ENCODE measurements at regions of chr7 and their contacts with region 1.

Region 1: DNA sequence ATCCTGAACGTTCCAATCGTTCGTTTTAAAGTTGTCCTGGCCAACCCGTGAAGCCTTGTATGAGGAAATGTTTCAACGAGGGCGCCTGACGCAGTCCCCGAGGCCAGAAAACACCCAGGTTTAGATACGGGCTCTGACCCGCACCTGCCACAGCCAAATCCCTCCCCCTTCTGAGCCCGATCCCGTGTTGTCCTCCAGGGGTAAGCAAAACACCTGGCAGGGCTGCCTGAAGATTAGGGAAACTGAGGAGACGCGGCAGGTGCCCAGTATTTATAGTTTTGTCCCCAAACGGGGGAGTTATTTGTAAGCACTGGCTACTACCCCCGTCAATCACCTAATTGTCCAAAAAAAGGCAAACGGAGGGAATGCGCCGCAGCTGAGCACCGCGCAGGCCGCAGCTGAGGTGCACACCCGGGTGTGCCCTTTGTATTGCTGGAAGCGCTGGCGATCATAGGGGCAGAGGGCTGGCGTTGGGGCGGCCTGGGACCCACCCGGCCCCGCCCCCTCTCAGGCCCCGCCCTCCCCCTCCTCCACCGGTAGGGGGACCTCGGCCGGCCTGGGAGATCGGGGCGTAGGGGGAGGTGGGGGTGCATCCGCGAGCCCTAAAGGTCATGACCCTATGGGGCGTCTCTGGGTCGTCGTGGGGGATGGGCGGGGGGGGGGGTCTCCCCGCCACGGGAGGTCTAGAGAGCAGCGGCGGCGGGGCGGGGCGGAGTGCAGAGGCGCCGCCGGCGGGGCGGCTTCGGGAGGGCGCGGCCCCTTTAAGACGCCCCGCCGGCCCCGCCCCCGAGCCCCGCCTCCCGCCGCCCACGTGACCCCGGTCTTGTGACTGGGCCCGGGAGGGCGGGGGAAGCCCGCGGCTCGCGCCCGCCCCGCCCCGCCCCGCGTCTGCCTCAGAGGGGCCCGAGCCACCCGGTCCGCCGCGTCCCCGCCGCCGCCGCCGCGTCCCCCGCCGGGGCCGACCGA is at the start of gene BRI3:
- DNase-seq: peak; percentile 91
- H3K4me3 Mint-ChIP-seq: peak within 1 kb of the TSS; percentile 77
- H3K27ac Mint-ChIP-seq: peak within 1 kb of the TSS; percentile 41
- H3K4me1 Mint-ChIP-seq: peaks cover 29% of the 10 kb centered on the region
- H3K27me3 Mint-ChIP-seq: no peaks in the 10 kb centered on the region
- total RNA-seq, gene BRI3: 51.6 to 54.4 TPM

Region 2: DNA sequence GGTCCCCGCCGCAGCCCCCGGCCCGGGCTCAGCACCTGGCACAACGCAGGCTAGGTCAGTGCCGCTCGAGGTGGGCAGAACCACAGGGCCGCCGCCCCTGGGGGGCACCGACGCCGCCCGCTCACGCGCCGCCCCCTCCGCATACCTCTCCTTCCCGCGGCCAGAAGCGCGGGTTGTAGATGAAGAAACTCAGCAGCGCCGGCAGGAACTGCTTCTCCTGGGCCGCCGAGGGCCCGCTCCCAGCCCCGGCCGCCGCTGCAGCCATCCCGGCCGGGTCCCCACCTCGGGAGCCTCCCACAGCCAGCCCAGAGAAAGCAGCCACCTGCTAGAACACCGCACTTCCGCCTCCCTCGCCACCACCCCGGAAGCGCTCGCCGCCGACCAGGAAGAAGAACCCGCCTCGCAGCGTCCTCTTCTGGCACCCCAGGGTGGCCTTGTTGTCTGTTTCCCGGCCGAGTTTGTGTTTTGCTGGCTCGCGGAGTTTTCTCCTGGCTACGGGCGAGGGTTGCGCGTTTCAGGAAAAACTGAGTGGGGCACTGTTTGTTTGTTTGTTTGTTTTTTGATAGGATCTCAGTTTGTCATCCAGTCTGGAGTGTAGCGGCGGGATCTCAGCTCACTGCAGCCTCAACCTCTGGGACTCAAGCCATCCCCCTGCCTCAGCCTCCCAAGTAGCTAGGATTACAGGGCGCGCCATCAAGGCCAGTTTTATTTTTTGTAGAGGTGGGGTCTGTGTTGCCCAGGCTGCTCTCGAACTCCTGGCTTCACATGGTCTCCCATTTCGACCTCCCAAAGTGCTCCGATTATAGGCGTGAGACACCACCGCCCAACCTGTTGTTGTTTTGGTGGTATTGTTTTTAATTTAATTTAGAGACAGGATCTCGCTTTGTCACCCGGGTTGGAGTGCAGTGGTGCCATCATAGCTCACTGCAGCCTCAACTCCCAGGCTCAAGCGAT is 308.8 kb before region 1 on chr7:
- CTCF ChIA-PET with region 1: no interaction called
- intact Hi-C with region 1: loop called (anchors 2 kb)
- DNase-seq: peak; percentile 91
- H3K4me3 Mint-ChIP-seq: peak overlapping the region; percentile 94
- H3K27ac Mint-ChIP-seq: peak overlapping the region; percentile 95
- H3K4me1 Mint-ChIP-seq: peaks cover 27% of the 10 kb centered on the region
- H3K27me3 Mint-ChIP-seq: no peaks in the 10 kb centered on the region

Region 3: GRCh38 chr7:98079891-98080648 is 201.0 kb before region 1 on chr7:
- CTCF ChIA-PET with region 1: no interaction called
- intact Hi-C with region 1: no loop called
- DNase-seq: no peak
- H3K4me3 Mint-ChIP-seq: no peak overlapping the region
- H3K27ac Mint-ChIP-seq: no peak overlapping the region
- H3K4me1 Mint-ChIP-seq: no peaks in the 10 kb centered on the region
- H3K27me3 Mint-ChIP-seq: peaks cover 5% of the 10 kb centered on the region

Region 4: DNA sequence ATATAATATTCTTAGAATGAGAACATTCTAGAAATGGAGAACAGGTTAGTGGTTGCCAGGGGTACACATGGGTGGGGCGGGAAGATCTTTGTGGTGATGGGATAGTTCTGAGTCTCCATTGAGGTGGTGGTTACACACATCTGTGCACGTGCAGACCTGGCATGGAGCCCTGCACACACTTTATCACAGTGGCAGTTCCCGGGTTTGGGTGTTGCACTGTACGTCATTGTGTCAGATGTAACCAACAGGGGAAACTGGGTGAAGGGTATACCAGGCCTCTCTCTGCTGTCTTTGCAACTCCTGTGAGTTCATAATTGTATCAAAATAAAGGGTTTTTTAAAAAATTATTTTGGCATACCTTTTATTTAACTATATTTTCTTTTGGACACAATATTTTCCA is 123.3 kb before region 1 on chr7:
- CTCF ChIA-PET with region 1: no interaction called
- intact Hi-C with region 1: no loop called
- DNase-seq: no peak
- H3K4me3 Mint-ChIP-seq: no peak overlapping the region
- H3K27ac Mint-ChIP-seq: no peak overlapping the region
- H3K4me1 Mint-ChIP-seq: no peaks in the 10 kb centered on the region
- H3K27me3 Mint-ChIP-seq: no peaks in the 10 kb centered on the region

Region 5: DNA sequence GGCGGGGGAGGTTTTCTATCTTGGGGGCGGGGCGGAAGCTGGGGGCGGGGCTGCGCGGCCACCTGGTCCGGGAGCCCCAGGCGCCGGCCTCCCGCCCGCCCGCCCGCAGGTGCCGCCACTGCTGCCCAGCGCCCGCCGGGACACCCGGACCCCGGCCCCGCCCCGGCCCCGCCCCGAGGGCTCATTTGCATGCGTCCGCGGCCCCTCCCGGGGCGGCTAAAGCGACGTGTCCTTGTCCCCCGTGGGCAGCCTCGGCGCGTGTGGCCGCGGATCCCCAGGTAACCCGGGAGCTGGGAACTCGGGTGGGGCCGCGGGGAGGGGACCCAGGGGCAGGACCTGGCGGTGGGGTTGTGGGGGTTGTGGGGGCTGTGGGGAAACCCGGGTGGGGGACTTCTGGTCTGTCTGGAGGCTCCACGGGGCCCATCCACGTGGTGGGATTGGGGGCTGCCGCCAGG is 69.8 kb before region 1 on chr7 and contains the start of gene BHLHA15:
- CTCF ChIA-PET with region 1: no interaction called
- intact Hi-C with region 1: loop called (anchors 2 kb)
- DNase-seq: peak; percentile 22
- H3K4me3 Mint-ChIP-seq: peak within 1 kb of the TSS; percentile 59
- H3K27ac Mint-ChIP-seq: no peak within 1 kb of the TSS
- H3K4me1 Mint-ChIP-seq: peaks cover 4% of the 10 kb centered on the region
- H3K27me3 Mint-ChIP-seq: no peaks in the 10 kb centered on the region
- total RNA-seq, gene BHLHA15: 0.40 to 0.41 TPM

Region 6: DNA sequence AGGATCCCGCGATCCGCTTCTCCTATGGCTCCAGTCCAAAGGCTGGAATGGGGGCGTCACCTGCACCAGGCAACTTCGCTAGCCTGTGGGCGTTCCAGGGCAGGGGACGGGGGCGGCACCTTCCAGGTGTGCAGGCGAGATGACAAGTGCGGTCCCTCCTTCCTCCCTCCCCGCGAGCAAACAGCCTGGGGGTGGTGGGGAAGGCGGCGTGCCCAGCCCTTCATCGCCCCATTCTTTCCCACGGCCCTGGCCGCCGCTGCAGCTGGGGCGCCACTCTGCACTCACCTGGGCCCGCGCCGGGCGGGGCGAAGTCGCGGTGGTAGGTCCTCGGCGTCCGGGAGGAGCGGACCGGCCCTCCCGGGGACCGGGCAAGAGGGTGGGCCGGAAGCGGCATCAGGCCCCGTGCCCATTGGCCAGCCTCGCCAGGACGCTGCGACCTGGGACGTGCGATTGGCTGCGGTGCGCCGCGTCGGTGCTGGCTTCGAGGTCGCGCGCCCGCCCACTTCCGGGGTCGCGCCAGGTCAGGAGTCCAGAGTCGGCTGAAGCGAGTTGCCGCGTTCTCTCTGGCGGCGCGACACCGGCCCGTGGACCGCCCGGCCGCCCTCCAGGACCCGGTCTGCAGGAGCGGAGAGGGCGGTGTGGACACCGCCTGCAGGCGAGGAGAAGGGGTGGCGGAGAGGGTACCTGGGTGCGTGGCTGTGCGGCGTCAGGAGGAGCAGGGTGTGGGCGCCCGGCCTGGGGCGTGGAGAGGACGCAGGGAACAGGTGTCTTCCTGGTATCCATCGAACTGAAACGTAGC is 29.0 kb before region 1 on chr7 and contains the start of gene TECPR1:
- CTCF ChIA-PET with region 1: no interaction called
- intact Hi-C with region 1: loop called (anchors 1 kb)
- DNase-seq: peak; percentile 90
- H3K4me3 Mint-ChIP-seq: peak within 1 kb of the TSS; percentile 93
- H3K27ac Mint-ChIP-seq: peak within 1 kb of the TSS; percentile 94
- H3K4me1 Mint-ChIP-seq: peaks cover 53% of the 10 kb centered on the region
- H3K27me3 Mint-ChIP-seq: no peaks in the 10 kb centered on the region
- total RNA-seq, gene TECPR1: 29.8 to 36.7 TPM

Region 7: GRCh38 chr7:98474558-98474957 is 193.5 kb after region 1 on chr7:
- CTCF ChIA-PET with region 1: no interaction called
- intact Hi-C with region 1: no loop called
- DNase-seq: no peak
- H3K4me3 Mint-ChIP-seq: no peak overlapping the region
- H3K27ac Mint-ChIP-seq: no peak overlapping the region
- H3K4me1 Mint-ChIP-seq: peaks cover 4% of the 10 kb centered on the region
- H3K27me3 Mint-ChIP-seq: peaks cover 21% of the 10 kb centered on the region

Measured in activated naive CD4-positive, alpha-beta T cell treated with anti-CD3 and anti-CD28 coated beads for 36 hours (primary cell).